Activated CD4-positive, alpha-beta memory T cell treated with anti-CD3 and anti-CD28 coated beads for 36 hours (primary cell): ENCODE measurements at regions of chr7 and their contacts with region 1.

Region 1: DNA sequence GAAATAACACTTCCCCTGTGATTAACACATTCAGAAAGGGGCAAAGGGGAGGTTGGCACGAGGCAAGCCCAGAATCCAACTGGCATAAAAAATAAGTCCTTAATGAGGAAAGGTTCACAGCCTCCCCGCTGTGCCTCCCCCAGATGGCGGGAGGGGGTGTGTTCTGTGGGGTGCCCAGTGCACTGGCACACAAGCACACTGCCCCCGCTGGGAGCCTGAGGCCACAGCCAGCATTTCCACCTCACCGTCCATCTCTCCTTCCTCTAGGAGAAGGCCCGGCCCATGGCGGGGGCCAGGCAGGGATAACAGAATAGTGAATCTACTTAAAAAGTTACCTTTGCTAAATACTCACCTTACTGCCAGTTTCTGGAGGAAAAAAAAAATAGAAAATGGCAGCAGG is 43.2 kb downstream of the PRKAG2 start:
- DNase-seq: no peak
- H3K4me3 Mint-ChIP-seq: no peak overlapping the region
- H3K27ac Mint-ChIP-seq: no peak overlapping the region
- H3K4me1 Mint-ChIP-seq: peaks cover 26% of the 10 kb centered on the region
- H3K27me3 Mint-ChIP-seq: no peaks in the 10 kb centered on the region

Region 2: GRCh38 chr7:151851145-151851751 is 17.6 kb after region 1 on chr7:
- CTCF ChIA-PET with region 1: interaction called, 7 read pairs
- POLR2A ChIA-PET with region 1: interaction called, 6 read pairs
- intact Hi-C with region 1: loop called (anchors 2 kb)
- DNase-seq: peak; percentile 60
- H3K4me3 Mint-ChIP-seq: peak overlapping the region; percentile 51
- H3K27ac Mint-ChIP-seq: peak overlapping the region; percentile 65
- H3K4me1 Mint-ChIP-seq: peaks cover 28% of the 10 kb centered on the region
- H3K27me3 Mint-ChIP-seq: no peaks in the 10 kb centered on the region